Body of pancreas (tissue), 4 donors: ENCODE measurements at regions of chr12 and their contacts with region 1.

Region 1: GRCh38 chr12:40028301-40028700 is 77.6 kb downstream of the SLC2A13 start:
- DNase-seq: no peak
- ATAC-seq: no peak
- H3K4me3 ChIP-seq: no peak overlapping the region
- H3K27ac ChIP-seq: no peak overlapping the region
- H3K4me1 ChIP-seq: peaks cover 21% of the 10 kb centered on the region
- H3K27me3 ChIP-seq: no peaks in the 10 kb centered on the region
- CTCF ChIP-seq: no peak
- POLR2A ChIP-seq: no peak

Region 2: DNA sequence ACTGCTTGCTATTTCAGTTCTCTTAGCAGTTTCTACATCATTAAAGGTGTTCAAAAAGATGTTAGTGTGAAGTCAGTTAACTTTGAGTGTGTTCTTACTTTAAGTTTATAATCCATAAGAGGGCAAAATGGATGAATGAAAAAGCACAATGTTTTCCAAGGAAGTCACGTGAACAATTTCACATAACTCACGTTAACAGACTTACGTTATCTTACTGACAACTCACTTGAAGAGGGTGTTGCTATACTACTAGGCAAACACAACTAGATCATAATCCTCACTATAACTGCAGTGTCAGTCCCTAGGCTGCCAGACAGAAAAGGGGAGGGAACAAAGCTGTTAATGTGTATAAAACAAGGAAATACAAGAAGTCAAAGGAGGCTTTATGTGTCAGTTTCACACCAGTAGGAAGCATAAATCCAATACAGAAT is 71.1 kb after region 1 on chr12:
- intact Hi-C with region 1: loop called (anchors 10 kb)
- DNase-seq: peak in 3 of 4 donors; percentile 30 to 63 (median 48)
- ATAC-seq: peak; percentile 88
- H3K4me3 ChIP-seq: no peak overlapping the region
- H3K27ac ChIP-seq: peak overlapping the region in 3 of 4 donors; percentile 36 to 65 (median 40)
- H3K4me1 ChIP-seq: peaks cover 52% of the 10 kb centered on the region
- H3K27me3 ChIP-seq: no peaks in the 10 kb centered on the region
- CTCF ChIP-seq: no peak
- POLR2A ChIP-seq: peak in 1 of 3 donors; percentile 29